Right cardiac atrium (tissue), 5 donors: ENCODE measurements at regions of chr1 and their contacts with region 1.

Region 1: DNA sequence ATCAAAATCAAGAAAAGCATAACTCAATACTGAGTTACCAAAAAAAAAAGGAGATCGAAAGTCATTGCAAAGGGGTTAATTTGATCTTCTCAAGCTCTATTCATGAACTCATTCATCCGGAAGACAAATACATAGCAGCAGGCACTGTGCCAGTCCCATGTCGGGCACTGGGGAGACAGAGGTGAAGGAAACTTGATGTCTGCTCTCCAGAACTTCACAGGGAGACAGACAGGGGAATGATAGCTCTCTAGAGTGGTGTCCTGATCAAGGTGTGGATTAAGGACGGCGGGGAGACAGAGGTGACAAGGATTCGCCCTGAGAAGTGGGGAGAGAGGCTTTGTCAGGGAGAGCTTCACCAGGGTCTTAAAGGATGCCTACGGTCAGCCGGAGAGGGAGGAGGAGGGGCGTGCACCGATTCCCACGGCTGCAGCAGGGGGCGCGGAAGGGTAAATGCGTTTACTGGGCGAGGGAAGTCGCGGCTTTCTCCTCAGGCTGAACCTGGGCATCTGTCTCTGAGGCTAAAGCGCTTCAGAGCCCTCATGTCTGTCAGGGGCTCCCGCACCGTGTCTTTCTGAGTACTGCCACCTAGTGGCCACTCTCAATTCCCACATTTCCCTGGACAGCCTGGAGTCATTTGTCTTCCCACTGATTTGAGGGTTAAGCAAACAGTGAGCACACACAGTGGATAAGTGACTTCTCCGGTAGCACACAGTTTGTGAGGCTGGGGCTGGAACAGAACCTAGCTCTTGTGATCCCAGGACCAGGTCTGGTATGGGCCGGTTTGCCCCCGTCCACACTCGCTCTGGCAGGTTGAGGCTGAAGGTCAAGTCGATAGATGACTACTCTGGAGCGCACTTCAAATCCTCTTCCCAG is 152.8 kb downstream of the TENT5C start:
- DNase-seq: peak; percentile 60 to 76 (median 75)
- ATAC-seq: peak; percentile 95 to 96
- H3K4me3 ChIP-seq: peak overlapping the region; percentile 36
- H3K27ac ChIP-seq: no peak overlapping the region
- H3K4me1 ChIP-seq: no peaks in the 10 kb centered on the region
- H3K27me3 ChIP-seq: no peaks in the 10 kb centered on the region

Region 2: GRCh38 chr1:117512743-117513321 is 245.8 kb before region 1 on chr1:
- intact Hi-C with region 1: loop called in 3 of 4 experiments (anchors 5 kb)
- DNase-seq: no peak
- ATAC-seq: no peak
- H3K4me3 ChIP-seq: no peak overlapping the region
- H3K27ac ChIP-seq: no peak overlapping the region
- H3K4me1 ChIP-seq: no peaks in the 10 kb centered on the region
- H3K27me3 ChIP-seq: no peaks in the 10 kb centered on the region

Region 3: DNA sequence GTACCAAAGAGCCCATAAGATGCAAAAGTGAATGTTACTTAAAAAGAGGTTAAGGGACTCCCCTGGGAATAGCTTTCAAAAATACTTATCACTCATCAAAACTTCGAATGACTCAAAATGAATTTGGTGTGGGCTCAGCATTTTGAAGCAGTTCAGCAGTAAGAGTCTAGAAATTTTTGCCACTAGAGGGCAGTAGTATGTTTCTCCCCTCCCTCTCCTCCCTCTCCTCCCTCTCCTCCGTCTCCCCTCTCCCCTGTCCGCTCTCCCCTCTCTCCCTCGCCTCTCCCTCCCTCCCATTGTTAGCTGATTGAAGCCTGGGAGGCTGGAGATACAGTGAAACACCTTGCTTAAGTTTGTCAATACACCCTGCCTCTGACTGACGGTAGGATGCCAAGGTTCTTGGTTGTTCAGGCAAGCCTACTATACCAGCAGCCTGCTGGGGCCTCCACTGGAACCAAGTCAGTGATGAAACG is 223.6 kb before region 1 on chr1:
- intact Hi-C with region 1: loop called in 3 of 4 experiments (anchors 2 to 5 kb)
- DNase-seq: no peak
- ATAC-seq: peak; percentile 89 to 91
- H3K4me3 ChIP-seq: no peak overlapping the region
- H3K27ac ChIP-seq: no peak overlapping the region
- H3K4me1 ChIP-seq: no peaks in the 10 kb centered on the region
- H3K27me3 ChIP-seq: no peaks in the 10 kb centered on the region

Region 4: DNA sequence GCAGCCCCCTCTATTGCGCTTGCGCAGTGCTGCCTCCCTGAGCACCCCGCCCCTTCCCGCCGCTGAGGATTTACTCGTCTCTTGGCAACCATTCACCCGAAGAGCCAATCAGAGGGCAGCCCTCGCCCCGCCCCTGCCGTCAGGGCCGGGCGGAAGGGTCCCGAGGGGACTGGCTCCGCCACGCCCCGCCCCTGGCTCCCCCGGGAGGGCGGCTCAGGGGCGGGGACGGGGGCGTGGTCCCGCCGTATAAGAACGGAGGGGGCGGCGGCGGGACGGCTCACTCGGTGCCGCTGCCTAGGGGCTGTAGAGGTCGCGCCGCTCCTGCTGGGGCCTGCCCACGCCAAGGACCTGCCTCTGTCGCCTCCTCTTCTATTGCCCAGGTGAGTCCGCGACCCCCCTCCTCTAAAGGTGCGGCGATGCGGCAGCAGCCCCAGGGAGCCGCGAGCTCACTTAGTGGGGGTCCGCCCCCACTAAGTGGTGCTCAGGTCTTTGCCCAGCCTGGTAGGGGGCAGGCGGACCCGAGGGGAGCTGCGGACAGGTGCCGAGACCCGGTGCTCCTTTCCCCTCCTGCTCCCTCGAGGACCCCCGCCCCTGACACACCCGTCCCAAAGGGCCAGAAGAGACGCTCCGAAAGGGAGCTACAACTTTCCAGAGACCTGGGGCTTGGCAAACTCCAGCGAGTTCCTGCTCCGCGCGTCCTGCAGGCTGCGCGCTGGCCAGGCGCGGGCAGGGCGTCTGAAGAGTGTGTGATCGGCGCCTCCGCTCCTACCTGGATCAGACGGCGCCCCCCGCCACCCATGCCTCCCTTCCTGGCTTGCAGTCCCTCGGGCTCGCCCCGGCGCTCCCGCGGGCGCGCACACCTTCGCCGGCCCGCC is 152.7 kb before region 1 on chr1 and contains the start of gene TENT5C:
- intact Hi-C with region 1: loop called in 3 of 4 experiments (anchors 2 to 10 kb)
- DNase-seq: peak; percentile 97 to 99 (median 99)
- ATAC-seq: peak; percentile 97 to 99
- H3K4me3 ChIP-seq: peak within 1 kb of the TSS; percentile 72
- H3K27ac ChIP-seq: peak within 1 kb of the TSS; percentile 76
- H3K4me1 ChIP-seq: peaks cover 8% of the 10 kb centered on the region
- H3K27me3 ChIP-seq: no peaks in the 10 kb centered on the region
- total RNA-seq, gene TENT5C: 20.4 to 33.1 (median 31.7) TPM

Region 5: DNA sequence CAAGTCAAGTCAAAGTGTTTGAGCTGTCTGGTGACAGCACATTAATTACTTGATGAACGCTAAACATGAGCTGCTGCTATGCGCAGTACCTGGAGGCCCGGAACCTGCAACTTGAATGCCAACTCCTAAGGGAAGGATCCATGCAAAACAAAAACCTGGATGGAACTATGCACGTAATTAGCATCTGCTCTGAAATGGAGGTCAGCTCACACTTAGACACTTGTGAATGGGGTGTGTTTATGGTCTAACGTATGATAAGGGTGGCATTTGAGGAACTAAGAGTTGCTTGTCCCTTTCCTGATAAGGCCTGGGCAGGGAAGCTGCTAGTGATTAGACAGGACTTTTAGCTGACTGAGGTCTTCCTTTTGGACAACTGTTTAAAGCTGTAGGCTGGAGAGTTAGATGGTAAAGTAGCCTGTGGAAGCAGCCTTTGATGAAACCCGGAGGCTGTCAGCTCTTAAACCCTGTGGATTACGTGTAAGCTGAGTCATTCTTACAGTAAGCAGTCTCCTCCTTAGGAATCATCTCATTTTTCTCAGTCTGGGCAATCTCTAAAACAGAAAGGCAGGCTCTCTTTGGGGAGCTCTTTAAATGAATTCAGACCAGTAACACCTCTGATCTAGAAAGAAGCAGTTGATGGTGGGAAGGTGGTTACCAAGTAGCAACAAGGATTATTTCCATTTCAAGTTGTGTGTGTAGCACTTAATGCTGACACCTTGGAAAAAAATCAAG is 146.0 kb before region 1 on chr1:
- intact Hi-C with region 1: loop called in 3 of 4 experiments (anchors 2 to 10 kb)
- DNase-seq: no peak
- ATAC-seq: peak; percentile 44 to 62
- H3K4me3 ChIP-seq: no peak overlapping the region
- H3K27ac ChIP-seq: peak overlapping the region; percentile 93
- H3K4me1 ChIP-seq: peaks cover 24% of the 10 kb centered on the region
- H3K27me3 ChIP-seq: no peaks in the 10 kb centered on the region

Region 6: DNA sequence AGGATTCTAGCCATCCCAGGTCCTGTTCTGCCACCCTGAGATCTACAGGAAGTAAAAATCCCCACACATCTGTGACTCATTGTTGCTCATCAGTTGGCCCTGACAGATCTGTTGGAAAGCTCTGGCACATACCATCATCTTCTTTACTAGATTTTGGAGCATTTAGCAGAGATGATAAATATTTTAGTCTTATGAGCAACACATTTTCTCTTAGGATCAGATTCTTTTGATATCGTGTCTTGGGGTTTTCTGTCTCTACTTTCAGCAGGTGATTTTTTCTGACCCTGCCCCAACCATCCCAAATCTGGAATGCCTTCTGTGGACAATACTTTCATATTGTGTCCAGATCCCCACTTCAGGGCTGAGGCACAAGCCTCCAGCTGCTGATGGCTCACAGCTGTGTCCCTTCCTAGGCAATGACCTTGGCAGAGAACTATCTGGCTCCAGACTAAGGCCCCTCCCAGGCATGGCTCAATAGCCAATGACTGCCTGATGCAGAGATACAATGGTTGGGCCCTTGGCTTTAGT is 67.9 kb after region 1 on chr1:
- intact Hi-C with region 1: no loop called
- DNase-seq: peak; percentile 74 to 88 (median 79)
- ATAC-seq: peak; percentile 73 to 81
- H3K4me3 ChIP-seq: no peak overlapping the region
- H3K27ac ChIP-seq: no peak overlapping the region
- H3K4me1 ChIP-seq: peaks cover 2% of the 10 kb centered on the region
- H3K27me3 ChIP-seq: no peaks in the 10 kb centered on the region